Activated CD4-positive, alpha-beta T cell treated with anti-CD3 and anti-CD28 coated beads for 36 hours (primary cell): ENCODE measurements at regions of chr16 and their contacts with region 1.

Region 1: GRCh38 chr16:68064791-68065365 is 20.3 kb upstream of the NFATC3 start:
- DNase-seq: peak; percentile 85
- ATAC-seq: peak; percentile 81
- H3K4me3 Mint-ChIP-seq: no peak overlapping the region
- H3K27ac Mint-ChIP-seq: peak overlapping the region; percentile 69
- H3K4me1 Mint-ChIP-seq: peaks cover 67% of the 10 kb centered on the region
- H3K27me3 Mint-ChIP-seq: no peaks in the 10 kb centered on the region

Region 2: DNA sequence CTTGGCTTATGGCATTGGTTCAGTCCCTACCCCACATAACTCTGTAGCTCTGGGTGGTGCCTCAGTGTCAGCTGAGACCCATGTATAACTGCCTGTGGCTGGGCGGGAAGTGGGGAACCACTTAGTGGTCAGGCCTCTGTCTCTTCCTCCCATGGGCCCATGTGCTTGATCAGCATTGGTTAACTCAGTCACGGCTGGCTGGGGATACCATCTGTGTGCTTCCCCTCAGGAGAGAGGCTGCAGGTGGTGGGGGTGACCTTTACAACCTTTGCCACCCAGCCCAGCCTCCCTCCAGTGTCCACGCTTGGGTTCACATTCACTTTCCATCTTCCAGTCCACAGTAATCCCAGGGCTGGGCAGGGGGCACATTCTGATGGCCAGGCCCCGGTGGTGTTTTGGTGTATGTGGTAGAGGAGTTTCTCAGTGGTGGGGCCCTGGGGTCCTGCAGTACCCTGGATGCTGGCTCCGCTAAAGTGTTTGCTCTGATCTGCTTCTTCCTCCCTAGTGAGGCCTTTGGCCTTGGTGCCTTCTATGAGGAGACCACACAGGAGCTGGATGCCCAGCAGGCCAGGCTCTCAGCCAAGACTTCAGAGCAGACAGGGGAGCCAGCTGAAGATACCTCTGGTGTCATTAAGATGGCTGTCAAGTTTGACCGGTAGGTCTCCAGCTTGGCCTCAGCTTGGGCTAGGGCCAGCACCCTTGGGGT is 10.1 kb after region 1 on chr16:
- CTCF ChIA-PET with region 1: interaction called, 15 read pairs
- POLR2A ChIA-PET with region 1: interaction called, 3 read pairs
- intact Hi-C with region 1: no loop called
- DNase-seq: peak; percentile 69
- ATAC-seq: peak; percentile 42
- H3K4me3 Mint-ChIP-seq: no peak overlapping the region
- H3K27ac Mint-ChIP-seq: peak overlapping the region; percentile 81
- H3K4me1 Mint-ChIP-seq: peaks cover 80% of the 10 kb centered on the region
- H3K27me3 Mint-ChIP-seq: no peaks in the 10 kb centered on the region